ENCODE measurements at regions of chr5 and their contacts with region 1.

Region 1: GRCh38 chr5:76269932-76270610 is 133.0 kb upstream of the IQGAP2 start:
- DNase-seq: peak; percentile 67
- H3K4me3 Mint-ChIP-seq: peak overlapping the region; percentile 50
- H3K27ac Mint-ChIP-seq: peak overlapping the region; percentile 95
- H3K4me1 Mint-ChIP-seq: peaks cover 41% of the 10 kb centered on the region
- H3K27me3 Mint-ChIP-seq: peaks cover 5% of the 10 kb centered on the region

Region 2: DNA sequence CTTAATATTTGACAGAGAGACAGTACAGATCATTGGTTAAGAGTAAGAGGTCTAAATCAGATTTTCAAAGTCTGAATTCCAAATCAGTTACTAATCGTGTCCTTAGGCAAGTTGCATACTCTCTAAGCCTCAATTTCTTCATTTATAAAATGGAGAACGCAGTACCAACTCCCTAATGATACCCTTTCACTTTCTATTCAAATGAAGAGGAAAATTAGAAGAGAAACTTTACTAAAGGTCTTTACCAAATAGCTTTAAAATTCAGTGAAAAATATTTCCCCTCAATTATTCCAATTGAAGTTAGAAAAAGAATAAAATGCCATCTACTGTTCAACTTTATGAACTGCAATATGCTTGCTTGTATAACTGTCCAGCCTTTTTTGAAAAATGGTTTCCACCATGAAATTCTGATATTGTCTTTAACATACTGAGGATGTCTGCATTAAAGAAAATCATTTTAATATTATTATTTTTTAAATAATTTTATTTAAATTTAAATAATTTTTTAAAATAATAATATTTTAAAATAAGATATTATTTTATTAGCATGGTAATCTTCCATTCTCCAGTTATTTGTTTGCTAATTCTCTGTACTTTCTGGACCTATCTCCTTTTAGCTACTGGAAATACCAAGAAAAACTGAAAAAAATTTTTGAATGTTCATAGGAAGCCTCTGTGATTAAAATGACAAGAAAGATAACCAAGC is 588.8 kb before region 1 on chr5:
- CTCF ChIA-PET with region 1: no interaction called
- POLR2A ChIA-PET with region 1: no interaction called
- intact Hi-C with region 1: loop called (anchors 5 kb)
- DNase-seq: no peak
- H3K4me3 Mint-ChIP-seq: no peak overlapping the region
- H3K27ac Mint-ChIP-seq: no peak overlapping the region
- H3K4me1 Mint-ChIP-seq: peaks cover 14% of the 10 kb centered on the region
- H3K27me3 Mint-ChIP-seq: no peaks in the 10 kb centered on the region

Region 3: DNA sequence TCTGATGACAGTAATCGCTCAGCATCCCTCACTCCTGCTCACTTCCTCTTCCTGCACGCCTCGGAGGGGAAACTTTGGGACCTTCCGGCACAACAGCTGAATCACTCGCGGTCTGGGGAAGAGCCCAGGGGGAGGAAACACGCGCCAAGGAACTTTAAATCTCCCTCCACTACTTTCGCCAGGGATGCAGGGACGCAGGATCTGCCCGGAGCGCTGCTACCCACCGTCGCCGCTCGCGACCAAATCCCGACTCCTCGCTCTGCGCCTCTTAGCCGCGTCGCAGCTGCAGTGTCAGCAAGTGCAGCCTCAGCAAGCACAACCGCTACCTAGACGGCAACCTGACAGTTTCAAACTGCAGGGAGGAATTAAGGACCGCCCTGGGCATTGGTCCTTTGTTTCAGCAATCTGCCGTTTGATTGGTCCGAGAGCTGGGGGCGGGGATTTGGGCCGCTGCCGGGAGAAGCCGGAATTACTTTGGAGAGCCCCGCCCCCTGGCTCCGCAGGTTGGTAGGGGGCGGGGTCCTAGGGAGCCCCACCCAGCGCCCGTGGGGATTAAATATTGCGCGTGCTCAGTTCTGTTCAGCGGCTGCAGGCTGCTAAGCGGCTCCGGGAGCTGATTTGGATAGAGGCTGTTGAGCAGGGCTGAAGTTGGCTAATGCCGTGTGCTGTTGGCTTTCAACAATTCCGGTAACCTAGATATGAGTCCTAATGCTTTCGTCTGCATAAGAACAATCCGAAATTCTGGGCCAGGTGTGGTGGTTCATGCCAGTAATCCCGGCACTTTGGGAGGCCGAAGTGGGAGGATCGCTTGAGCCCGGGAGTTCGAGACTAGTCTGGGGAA is 552.8 kb before region 1 on chr5 and contains the start of gene POC5:
- CTCF ChIA-PET with region 1: no interaction called
- POLR2A ChIA-PET with region 1: no interaction called
- intact Hi-C with region 1: loop called (anchors 5 kb)
- DNase-seq: peak; percentile 99
- H3K4me3 Mint-ChIP-seq: peak within 1 kb of the TSS; percentile 98
- H3K27ac Mint-ChIP-seq: peak within 1 kb of the TSS; percentile 99
- H3K4me1 Mint-ChIP-seq: peaks cover 28% of the 10 kb centered on the region
- H3K27me3 Mint-ChIP-seq: no peaks in the 10 kb centered on the region
- total RNA-seq, gene POC5: 20.7 to 21.8 TPM

Region 4: DNA sequence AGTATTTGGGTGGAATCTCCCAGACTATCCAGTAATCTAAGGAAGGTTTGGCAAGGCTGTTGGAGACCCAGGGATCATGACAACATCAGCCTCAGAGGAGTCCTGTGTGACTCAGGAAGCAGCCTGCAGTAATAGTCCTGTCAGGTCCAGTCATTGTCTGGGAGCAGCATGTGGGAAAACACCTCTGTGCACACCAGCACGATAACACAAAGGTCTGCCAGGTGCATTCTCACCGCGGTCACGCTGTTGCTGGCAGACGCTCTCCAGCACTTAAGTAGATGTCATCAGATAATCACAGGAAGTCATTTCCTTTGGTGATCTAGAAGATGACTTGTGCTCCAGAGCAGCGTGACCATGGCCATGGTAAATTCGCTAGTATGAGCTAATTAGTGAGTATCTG is 33.9 kb after region 1 on chr5:
- CTCF ChIA-PET with region 1: interaction called, 6 read pairs
- POLR2A ChIA-PET with region 1: no interaction called
- intact Hi-C with region 1: loop called (anchors 1 kb)
- DNase-seq: peak; percentile 73
- H3K4me3 Mint-ChIP-seq: no peak overlapping the region
- H3K27ac Mint-ChIP-seq: no peak overlapping the region
- H3K4me1 Mint-ChIP-seq: peaks cover 30% of the 10 kb centered on the region
- H3K27me3 Mint-ChIP-seq: no peaks in the 10 kb centered on the region

Region 5: GRCh38 chr5:76325876-76326491 is 55.9 kb after region 1 on chr5:
- CTCF ChIA-PET with region 1: no interaction called
- POLR2A ChIA-PET with region 1: no interaction called
- intact Hi-C with region 1: loop called (anchors 1 kb)
- DNase-seq: peak; percentile 50
- H3K4me3 Mint-ChIP-seq: peak overlapping the region; percentile 43
- H3K27ac Mint-ChIP-seq: peak overlapping the region; percentile 86
- H3K4me1 Mint-ChIP-seq: peaks cover 56% of the 10 kb centered on the region
- H3K27me3 Mint-ChIP-seq: no peaks in the 10 kb centered on the region

Region 6: GRCh38 chr5:76582230-76583162 is 312.4 kb after region 1 on chr5:
- CTCF ChIA-PET with region 1: interaction called, 3 read pairs
- POLR2A ChIA-PET with region 1: interaction called, 3 read pairs
- intact Hi-C with region 1: loop called (anchors 1 kb)
- DNase-seq: peak; percentile 59
- H3K4me3 Mint-ChIP-seq: no peak overlapping the region
- H3K27ac Mint-ChIP-seq: peak overlapping the region; percentile 66
- H3K4me1 Mint-ChIP-seq: peaks cover 27% of the 10 kb centered on the region
- H3K27me3 Mint-ChIP-seq: no peaks in the 10 kb centered on the region

Region 7: GRCh38 chr5:76733049-76733417 is 463.0 kb after region 1 on chr5:
- CTCF ChIA-PET with region 1: no interaction called
- POLR2A ChIA-PET with region 1: no interaction called
- intact Hi-C with region 1: loop called (anchors 2 kb)
- DNase-seq: peak; percentile 77
- H3K4me3 Mint-ChIP-seq: peak overlapping the region; percentile 46
- H3K27ac Mint-ChIP-seq: peak overlapping the region; percentile 86
- H3K4me1 Mint-ChIP-seq: peaks cover 29% of the 10 kb centered on the region
- H3K27me3 Mint-ChIP-seq: peaks cover 3% of the 10 kb centered on the region